ENCODE measurements at regions of chr15 and their contacts with region 1.

Region 1: DNA sequence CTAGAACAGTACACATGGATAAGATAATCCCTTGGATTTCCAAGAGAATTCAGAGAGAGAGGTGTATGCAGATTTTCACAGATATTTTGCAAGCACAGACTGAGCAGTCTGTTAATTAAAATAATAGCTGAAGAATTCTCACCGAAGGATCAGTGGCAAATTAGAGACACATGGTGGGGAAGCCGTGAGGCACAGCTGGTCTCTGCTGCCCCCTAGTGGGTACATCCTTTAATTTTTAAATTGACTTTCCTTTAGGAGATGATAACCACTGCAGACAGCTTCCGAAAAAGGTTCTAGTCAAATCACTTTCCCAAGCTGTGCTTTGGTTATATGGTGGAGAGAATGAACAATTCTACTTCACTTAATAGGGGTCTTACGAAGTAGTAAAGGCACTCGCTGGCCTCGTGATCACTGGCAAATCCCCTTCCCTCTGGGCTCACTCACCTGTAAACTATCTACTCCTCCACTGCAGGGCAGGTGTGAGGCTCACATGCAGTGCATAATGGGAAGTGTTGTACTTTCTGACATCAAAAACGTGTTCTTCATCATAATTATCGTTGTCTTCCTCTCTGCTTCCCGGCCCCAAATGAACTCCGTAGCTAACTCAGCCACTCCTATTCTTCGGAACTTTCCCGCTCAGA is 19.5 kb downstream of the MESD start:
- DNase-seq: peak; percentile 35
- ATAC-seq: peak; percentile 76
- H3K4me3 ChIP-seq: no peak overlapping the region
- H3K27ac ChIP-seq: no peak overlapping the region
- H3K4me1 ChIP-seq: no peaks in the 10 kb centered on the region
- H3K27me3 ChIP-seq: no peaks in the 10 kb centered on the region
- CTCF ChIP-seq: peak; percentile 81
- EP300 ChIP-seq: no peak
- POLR2A ChIP-seq: no peak
- RAD21 ChIP-seq: peak; percentile 71

Region 2: GRCh38 chr15:80455668-80456442 is 514.3 kb before region 1 on chr15:
- CTCF ChIA-PET with region 1: interaction called, 5 read pairs
- POLR2A ChIA-PET with region 1: no interaction called
- in situ Hi-C with region 1: loop called (anchors 25 kb)
- intact Hi-C with region 1: loop called (anchors 5 kb)
- DNase-seq: peak; percentile 44
- ATAC-seq: peak; percentile 68
- H3K4me3 ChIP-seq: no peak overlapping the region
- H3K27ac ChIP-seq: no peak overlapping the region
- H3K4me1 ChIP-seq: peaks cover 46% of the 10 kb centered on the region
- H3K27me3 ChIP-seq: no peaks in the 10 kb centered on the region
- CTCF ChIP-seq: peak; percentile 91
- EP300 ChIP-seq: no peak
- POLR2A ChIP-seq: no peak
- RAD21 ChIP-seq: peak; percentile 80

Region 3: GRCh38 chr15:80660122-80660521 is 310.0 kb before region 1 on chr15:
- CTCF ChIA-PET with region 1: interaction called, 7 read pairs
- POLR2A ChIA-PET with region 1: no interaction called
- in situ Hi-C with region 1: loop called (anchors 5 kb)
- intact Hi-C with region 1: loop called (anchors 1 kb)
- DNase-seq: peak; percentile 42
- ATAC-seq: peak; percentile 96
- H3K4me3 ChIP-seq: no peak overlapping the region
- H3K27ac ChIP-seq: no peak overlapping the region
- H3K4me1 ChIP-seq: no peaks in the 10 kb centered on the region
- H3K27me3 ChIP-seq: no peaks in the 10 kb centered on the region
- CTCF ChIP-seq: peak; percentile 77
- EP300 ChIP-seq: no peak
- POLR2A ChIP-seq: no peak
- RAD21 ChIP-seq: 0 out of 2 replicates have a peak, but pooled peaks have one; percentile 40

Region 4: GRCh38 chr15:80835338-80835737 is 134.8 kb before region 1 on chr15:
- CTCF ChIA-PET with region 1: interaction called, 3 read pairs
- POLR2A ChIA-PET with region 1: interaction called, 3 read pairs
- in situ Hi-C with region 1: no loop called
- intact Hi-C with region 1: loop called (anchors 1 kb)
- DNase-seq: peak; percentile 50
- ATAC-seq: peak; percentile 35
- H3K4me3 ChIP-seq: no peak overlapping the region
- H3K27ac ChIP-seq: peak overlapping the region; percentile 20
- H3K4me1 ChIP-seq: peaks cover 92% of the 10 kb centered on the region
- H3K27me3 ChIP-seq: no peaks in the 10 kb centered on the region
- CTCF ChIP-seq: peak; percentile 51
- EP300 ChIP-seq: no peak
- POLR2A ChIP-seq: no peak
- RAD21 ChIP-seq: peak; percentile 60; the same call in 1 of the 2 replicates